Vagina (tissue), 2 donors: ENCODE measurements at regions of chr19 and their contacts with region 1.

Region 1: DNA sequence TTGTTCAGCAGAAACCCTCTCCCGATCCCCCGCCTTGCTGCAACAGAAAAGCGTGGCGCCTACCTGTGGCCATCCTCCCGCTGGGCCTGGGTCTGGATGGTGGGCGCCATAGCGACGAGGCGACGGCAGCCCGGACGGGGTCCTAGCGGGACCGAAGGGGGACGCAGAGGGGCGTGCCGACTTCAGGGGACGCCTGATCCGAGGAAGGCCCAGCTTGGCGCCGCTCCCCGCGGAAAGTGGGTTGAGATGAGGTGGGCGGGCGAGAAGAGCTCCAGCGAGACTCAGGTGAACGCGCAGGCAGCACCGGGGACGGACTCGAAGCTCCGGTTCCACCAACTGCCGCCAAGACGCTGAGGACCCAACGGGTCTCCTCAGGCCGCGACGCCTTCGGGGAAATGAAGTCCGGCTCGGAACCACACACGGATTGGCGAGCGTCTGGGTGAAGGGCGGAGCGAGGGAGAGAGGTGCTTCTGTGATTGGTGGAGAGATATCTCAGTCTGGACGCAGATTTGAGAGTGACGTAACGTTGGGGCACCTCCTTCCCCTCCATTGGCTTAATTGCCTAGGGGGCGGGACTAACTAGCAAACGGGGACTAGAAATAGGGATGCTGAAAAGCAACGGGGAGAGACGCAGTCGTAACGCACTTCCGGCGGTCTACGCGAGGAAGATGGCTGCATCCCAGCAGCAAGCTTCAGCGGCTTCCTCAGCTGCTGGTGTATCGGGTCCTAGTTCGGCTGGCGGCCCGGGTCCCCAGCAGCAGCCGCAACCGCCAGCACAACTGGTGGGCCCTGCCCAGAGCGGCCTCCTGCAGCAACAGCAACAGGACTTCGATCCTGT is at the starts of genes MED29 and PAF1:
- DNase-seq: peak in 1 of 2 donors; percentile 100
- H3K4me3 ChIP-seq: peak within 1 kb of the TSS; percentile 93 to 99
- H3K27ac ChIP-seq: peak within 1 kb of the TSS; percentile 99
- H3K4me1 ChIP-seq: peaks cover 33% of the 10 kb centered on the region
- H3K27me3 ChIP-seq: no peaks in the 10 kb centered on the region
- CTCF ChIP-seq: no peak
- POLR2A ChIP-seq: peak in 1 of 2 donors; percentile 73
- total RNA-seq, gene MED29: 37.8 TPM
- total RNA-seq, gene PAF1: 70.2 TPM

Region 2: GRCh38 chr19:39347332-39348164 is 43.4 kb before region 1 on chr19:
- intact Hi-C with region 1: loop called (anchors 1 kb)
- DNase-seq: no peak
- H3K4me3 ChIP-seq: no peak overlapping the region
- H3K27ac ChIP-seq: peak overlapping the region; percentile 22
- H3K4me1 ChIP-seq: peaks cover 72% of the 10 kb centered on the region
- H3K27me3 ChIP-seq: no peaks in the 10 kb centered on the region
- CTCF ChIP-seq: no peak
- POLR2A ChIP-seq: no peak

Region 3: DNA sequence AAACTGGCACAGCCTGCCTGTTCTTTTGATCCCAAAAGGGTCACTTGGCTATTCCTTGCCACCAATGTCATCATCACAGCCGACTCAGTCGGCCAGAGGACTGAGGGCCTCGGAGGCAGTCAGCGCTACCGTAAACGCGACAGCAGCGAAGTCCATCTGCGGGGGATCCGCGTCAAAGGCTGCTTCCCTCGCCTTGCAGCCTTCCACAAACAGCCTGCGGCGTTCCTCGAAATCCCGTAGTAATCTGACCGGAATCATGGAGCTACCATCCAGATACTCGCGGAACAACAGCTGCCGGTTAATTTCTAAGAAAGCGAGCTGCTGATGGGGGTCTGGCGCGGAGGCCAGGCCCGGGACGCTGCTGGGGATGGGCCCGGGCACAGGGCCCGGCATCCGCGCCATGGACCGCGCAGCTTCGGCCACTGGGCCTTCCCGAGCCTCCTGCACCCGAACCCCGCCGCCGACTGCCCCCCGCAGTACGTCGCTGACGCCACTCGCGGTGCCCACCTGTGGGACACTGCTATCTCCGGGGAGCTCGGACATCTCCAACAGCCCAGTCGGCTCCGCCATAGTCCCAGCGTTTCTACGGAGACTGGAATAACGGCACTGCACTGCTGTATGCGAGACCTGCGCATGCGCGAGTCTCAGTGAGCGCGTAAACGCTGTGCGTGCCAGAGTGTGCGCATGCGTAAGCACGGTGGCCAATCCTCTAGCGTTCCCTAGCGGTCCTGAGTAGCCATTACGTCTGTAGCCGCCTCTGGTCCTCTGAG is 141.4 kb after region 1 on chr19 and contains the start of gene EID2B:
- intact Hi-C with region 1: loop called (anchors 10 kb)
- DNase-seq: peak in 1 of 2 donors; percentile 94
- H3K4me3 ChIP-seq: peak within 1 kb of the TSS; percentile 71 to 84
- H3K27ac ChIP-seq: peak within 1 kb of the TSS; percentile 82
- H3K4me1 ChIP-seq: peaks cover 16% of the 10 kb centered on the region
- H3K27me3 ChIP-seq: no peaks in the 10 kb centered on the region
- CTCF ChIP-seq: peak; percentile 96 to 99 (median 99)
- POLR2A ChIP-seq: peak in 1 of 2 donors; percentile 70
- total RNA-seq, gene EID2B: 3.7 TPM